Thyroid gland (tissue), 4 donors: ENCODE measurements at regions of chr15 and their contacts with region 1.

Region 1: GRCh38 chr15:57146506-57147201 is 228.2 kb downstream of the TCF12 start:
- DNase-seq: no peak
- H3K4me3 ChIP-seq: no peak overlapping the region
- H3K27ac ChIP-seq: no peak overlapping the region
- H3K4me1 ChIP-seq: peaks cover 0 to 16% of the 10 kb centered on the region in 2 donors
- H3K27me3 ChIP-seq: no peaks in the 10 kb centered on the region
- CTCF ChIP-seq: peak; percentile 31 to 81 (median 56)
- POLR2A ChIP-seq: no peak

Region 2: DNA sequence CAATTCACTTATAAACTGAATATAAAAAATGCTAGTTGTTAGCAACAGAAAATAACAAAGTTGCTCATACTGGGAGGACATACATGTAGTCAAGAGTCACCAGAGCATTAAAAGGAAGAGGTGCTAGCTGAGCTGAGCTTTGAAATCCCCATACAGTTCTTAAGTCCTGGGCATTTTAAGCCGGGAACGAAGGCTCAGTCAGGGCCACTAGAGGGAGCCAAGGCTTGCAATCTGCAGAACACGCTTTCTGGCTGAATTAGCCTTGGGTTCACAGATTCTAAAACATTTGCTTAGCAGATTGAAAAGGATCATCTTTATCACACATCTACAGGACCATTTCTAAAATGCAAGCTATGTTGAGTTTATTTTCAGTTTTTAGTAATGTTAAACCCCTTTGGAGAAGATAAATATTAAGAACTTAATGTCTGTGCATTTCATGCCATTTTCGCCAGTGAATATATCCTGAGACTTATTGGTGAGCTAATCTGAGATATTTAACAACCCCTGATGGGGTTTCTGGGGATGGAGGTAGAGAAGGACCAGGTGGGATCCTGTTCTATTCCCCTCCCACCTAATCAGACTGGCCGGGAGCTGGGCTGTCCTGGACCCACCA is 655.4 kb before region 1 on chr15:
- intact Hi-C with region 1: loop called (anchors 10 kb)
- DNase-seq: peak; percentile 48 to 49
- H3K4me3 ChIP-seq: no peak overlapping the region
- H3K27ac ChIP-seq: no peak overlapping the region
- H3K4me1 ChIP-seq: no peaks in the 10 kb centered on the region
- H3K27me3 ChIP-seq: no peaks in the 10 kb centered on the region
- CTCF ChIP-seq: peak in 5 of 6 experiments; percentile 22 to 86 (median 45)
- POLR2A ChIP-seq: no peak

Region 3: GRCh38 chr15:57213862-57214261 is 67.2 kb after region 1 on chr15:
- intact Hi-C with region 1: loop called (anchors 10 kb)
- DNase-seq: no peak
- H3K4me3 ChIP-seq: no peak overlapping the region
- H3K27ac ChIP-seq: no peak overlapping the region
- H3K4me1 ChIP-seq: peaks cover 4 to 15% of the 10 kb centered on the region in 2 donors
- H3K27me3 ChIP-seq: no peaks in the 10 kb centered on the region
- CTCF ChIP-seq: peak in 4 of 6 experiments; percentile 26 to 56 (median 50)
- POLR2A ChIP-seq: no peak

Region 4: GRCh38 chr15:57259568-57260040 is 113.0 kb after region 1 on chr15:
- intact Hi-C with region 1: no loop called
- DNase-seq: no peak
- H3K4me3 ChIP-seq: no peak overlapping the region
- H3K27ac ChIP-seq: no peak overlapping the region
- H3K4me1 ChIP-seq: peaks cover 16 to 17% of the 10 kb centered on the region in 2 donors
- H3K27me3 ChIP-seq: no peaks in the 10 kb centered on the region
- CTCF ChIP-seq: no peak
- POLR2A ChIP-seq: no peak